GM13977 (cell line): ENCODE measurements at regions of chrX and their contacts with region 1.

Region 1: GRCh38 chrX:120514236-120514635 is 45.1 kb upstream of the LAMP2 start:
- DNase-seq: no peak
- CTCF ChIP-seq: peak; percentile 35

Region 2: GRCh38 chrX:120334151-120334550 is 180.1 kb before region 1 on chrX:
- in situ Hi-C with region 1: no loop called
- DNase-seq: no peak
- CTCF ChIP-seq: no peak

Region 3: GRCh38 chrX:120380699-120381098 is 133.5 kb before region 1 on chrX:
- in situ Hi-C with region 1: no loop called
- DNase-seq: peak; percentile 23
- CTCF ChIP-seq: peak; percentile 37

Region 4: DNA sequence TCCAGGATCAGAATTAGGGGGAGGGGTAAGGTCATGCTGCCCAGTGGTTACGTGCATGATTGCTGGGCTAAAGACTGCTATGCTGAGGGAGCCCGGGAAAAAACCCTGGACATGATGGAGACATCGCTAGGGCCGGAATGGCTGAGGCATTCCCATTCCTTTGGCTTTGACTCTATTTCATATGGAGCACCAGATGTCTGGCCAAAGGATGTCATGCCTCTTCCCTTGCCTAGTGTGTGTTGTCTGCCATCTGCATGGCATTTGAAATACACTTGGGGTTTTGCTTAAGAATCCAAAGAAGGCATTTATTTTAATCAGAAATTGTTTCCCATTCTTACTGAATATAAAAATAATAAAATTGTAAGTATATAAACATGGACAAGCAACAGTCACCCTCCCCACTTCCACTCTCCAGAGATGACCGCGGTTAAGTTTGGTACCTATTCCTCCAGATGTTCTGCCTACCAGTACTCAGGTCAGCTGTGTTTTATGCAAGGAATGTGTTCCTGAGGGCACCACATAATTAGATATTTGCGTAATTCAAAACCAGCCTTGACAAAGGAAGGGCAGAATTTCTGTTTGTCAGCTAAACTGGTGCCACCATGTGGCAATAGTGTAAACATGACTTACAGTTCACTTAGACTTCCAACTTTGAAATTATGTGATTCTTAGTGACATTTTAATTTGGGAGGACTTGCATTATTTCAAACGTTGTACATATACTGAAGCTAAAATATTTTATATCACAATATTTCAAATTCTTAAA is 255.5 kb after region 1 on chrX:
- in situ Hi-C with region 1: loop called (anchors 25 kb)
- DNase-seq: peak; percentile 32
- CTCF ChIP-seq: peak; percentile 55